ENCODE measurements at regions of chr2 and their contacts with region 1.

Region 1: GRCh38 chr2:163182764-163183354 is 344.3 kb upstream of the KCNH7 start:
- DNase-seq: no peak
- H3K4me3 ChIP-seq: no peak overlapping the region
- CTCF ChIP-seq: peak; percentile 47

Region 2: GRCh38 chr2:163171786-163172531 is 10.9 kb before region 1 on chr2:
- CTCF ChIA-PET with region 1: interaction called, 90 read pairs
- POLR2A ChIA-PET with region 1: no interaction called
- DNase-seq: no peak
- H3K4me3 ChIP-seq: no peak overlapping the region
- CTCF ChIP-seq: no peak

Region 3: DNA sequence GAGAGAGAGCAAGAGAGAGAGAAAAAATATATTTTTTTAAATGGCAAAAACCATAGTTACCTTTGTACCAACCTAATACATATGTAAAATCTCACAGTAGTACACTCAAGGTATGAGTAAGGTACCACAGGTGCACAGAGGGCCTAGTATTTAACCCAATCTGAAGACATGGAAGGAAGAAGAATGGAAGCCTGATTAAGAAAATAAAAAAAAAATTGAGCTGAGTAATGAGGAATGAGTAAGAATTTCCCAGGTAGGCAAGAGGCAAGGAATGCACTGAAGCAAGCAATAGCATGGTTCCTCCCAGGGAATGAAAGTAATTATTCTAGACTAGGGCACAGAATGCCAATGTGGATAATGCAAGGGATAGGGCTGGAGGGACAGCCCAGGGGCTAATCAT is 258.7 kb after region 1 on chr2:
- CTCF ChIA-PET with region 1: no interaction called
- POLR2A ChIA-PET with region 1: no interaction called
- DNase-seq: no peak
- H3K4me3 ChIP-seq: no peak overlapping the region
- CTCF ChIP-seq: no peak

Region 4: GRCh38 chr2:163632333-163632732 is 449.5 kb after region 1 on chr2:
- CTCF ChIA-PET with region 1: no interaction called
- POLR2A ChIA-PET with region 1: no interaction called
- DNase-seq: no peak
- H3K4me3 ChIP-seq: no peak overlapping the region
- CTCF ChIP-seq: no peak

Region 5: DNA sequence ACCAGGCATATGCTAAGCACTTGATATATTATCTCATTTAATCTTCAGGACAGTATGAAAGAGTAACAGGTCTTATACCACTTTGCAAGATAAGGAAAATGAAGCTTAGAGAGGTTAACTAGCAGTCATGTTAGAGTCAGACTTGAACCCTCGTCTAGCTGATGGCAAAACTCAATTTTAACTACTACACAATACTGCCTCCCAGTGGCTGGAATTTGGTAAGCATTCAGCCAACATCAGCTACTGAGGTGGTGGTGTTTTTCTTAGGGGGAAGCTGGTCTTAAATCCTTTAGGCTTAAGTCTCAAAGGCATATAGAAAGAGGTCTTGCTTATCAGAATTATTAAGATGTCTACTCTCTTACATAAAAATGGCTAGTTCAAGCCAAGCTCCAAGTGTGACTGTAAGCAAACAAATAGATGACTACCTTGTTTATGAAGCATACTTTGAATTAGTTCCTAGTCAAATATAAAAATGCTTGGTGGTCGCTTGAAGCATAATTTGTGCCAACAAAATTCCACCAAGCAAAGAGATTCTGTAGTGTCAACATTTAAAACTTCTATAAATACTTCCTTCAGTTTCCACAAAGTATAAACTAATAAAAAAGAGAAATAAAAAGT is 878.4 kb after region 1 on chr2:
- CTCF ChIA-PET with region 1: interaction called, 12 read pairs
- POLR2A ChIA-PET with region 1: no interaction called
- DNase-seq: no peak
- H3K4me3 ChIP-seq: no peak overlapping the region
- CTCF ChIP-seq: peak; percentile 57

Region 6: DNA sequence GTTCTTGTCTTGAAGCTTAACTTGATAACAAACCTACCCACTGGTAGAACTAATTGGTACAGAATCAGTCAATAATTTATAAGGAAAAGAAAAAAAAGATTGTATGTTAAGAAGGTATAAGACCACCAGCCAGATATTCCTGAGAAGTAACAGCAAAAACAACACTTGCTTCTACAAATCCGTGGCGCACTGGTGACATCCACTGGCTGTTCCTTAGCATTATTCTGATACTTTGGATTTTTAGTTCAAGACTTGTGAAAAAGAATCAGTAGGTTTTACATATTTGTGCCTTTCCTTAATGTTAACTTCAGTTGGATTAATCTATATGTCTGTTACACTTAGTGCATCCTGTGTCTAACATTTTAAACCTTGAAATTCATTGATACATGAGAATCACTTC is 1296.6 kb after region 1 on chr2:
- CTCF ChIA-PET with region 1: interaction called, 19 read pairs
- POLR2A ChIA-PET with region 1: no interaction called
- DNase-seq: no peak
- H3K4me3 ChIP-seq: no peak overlapping the region
- CTCF ChIP-seq: peak; percentile 49

Region 7: GRCh38 chr2:164538240-164538866 is 1355.5 kb after region 1 on chr2:
- CTCF ChIA-PET with region 1: interaction called, 22 read pairs
- POLR2A ChIA-PET with region 1: no interaction called
- DNase-seq: no peak
- H3K4me3 ChIP-seq: no peak overlapping the region
- CTCF ChIP-seq: peak; percentile 59